Activated T-helper 1 cell treated with anti-CD3 and anti-CD28 coated beads, Interleukin-12 subunit alpha, Interleukin-12 subunit beta, Interleukin-2, Interleukin-4 antibody, amounts not matched to agents 30 ng/mL and 10 ng/mL and 1 ng/mL, durations not matched to agents 14 hours and 24 hours and 36 hours (primary cell): ENCODE measurements at regions of chr7 and their contacts with region 1.

Region 1: DNA sequence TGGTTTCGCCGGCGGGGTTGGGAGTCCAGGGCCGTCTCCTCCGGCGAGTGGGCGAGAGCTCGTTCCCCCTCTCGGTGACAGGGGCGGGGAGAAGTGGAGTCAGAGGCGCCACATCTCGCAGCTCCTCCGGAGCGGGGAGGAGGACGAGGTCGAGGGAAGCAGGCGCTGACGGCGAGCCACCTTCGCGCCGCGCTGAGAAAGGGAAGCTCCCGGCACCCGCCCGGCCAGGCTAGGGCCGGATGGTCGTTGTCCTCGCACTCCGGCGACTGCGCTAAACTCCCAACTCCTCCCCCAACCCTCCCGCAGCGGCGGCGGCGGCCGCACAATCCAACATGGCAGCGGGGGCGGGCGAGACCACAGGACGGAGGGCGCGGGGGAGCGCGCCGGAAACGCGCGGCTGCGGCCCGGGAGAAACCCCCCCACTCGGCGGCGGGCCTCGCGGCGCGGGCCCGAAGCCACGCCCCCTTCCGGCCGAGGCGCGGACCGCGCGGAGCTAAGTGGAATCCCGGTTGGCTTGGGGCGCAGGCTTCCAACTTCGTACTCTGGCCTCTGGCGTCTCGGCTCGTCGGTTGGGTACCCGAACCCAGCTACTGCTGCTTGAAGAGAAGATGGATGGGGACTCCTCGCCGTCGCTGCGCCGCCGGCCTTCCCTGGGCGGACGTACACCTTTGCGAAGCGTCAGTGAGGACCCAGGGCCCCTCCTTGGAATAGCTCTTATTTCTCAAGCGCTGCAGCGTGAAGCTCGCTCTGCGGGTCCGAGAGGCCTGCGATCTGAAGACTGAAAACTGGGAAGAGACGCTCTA is at the start of gene WASL:
- DNase-seq: peak; percentile 86
- H3K4me3 Mint-ChIP-seq: peak within 1 kb of the TSS; percentile 99
- H3K27ac Mint-ChIP-seq: peak within 1 kb of the TSS; percentile 96
- H3K4me1 Mint-ChIP-seq: peaks cover 62% of the 10 kb centered on the region
- H3K27me3 Mint-ChIP-seq: peaks cover 11% of the 10 kb centered on the region
- total RNA-seq, gene WASL: 7.3 and 7.5 TPM in 2 replicates

Region 2: DNA sequence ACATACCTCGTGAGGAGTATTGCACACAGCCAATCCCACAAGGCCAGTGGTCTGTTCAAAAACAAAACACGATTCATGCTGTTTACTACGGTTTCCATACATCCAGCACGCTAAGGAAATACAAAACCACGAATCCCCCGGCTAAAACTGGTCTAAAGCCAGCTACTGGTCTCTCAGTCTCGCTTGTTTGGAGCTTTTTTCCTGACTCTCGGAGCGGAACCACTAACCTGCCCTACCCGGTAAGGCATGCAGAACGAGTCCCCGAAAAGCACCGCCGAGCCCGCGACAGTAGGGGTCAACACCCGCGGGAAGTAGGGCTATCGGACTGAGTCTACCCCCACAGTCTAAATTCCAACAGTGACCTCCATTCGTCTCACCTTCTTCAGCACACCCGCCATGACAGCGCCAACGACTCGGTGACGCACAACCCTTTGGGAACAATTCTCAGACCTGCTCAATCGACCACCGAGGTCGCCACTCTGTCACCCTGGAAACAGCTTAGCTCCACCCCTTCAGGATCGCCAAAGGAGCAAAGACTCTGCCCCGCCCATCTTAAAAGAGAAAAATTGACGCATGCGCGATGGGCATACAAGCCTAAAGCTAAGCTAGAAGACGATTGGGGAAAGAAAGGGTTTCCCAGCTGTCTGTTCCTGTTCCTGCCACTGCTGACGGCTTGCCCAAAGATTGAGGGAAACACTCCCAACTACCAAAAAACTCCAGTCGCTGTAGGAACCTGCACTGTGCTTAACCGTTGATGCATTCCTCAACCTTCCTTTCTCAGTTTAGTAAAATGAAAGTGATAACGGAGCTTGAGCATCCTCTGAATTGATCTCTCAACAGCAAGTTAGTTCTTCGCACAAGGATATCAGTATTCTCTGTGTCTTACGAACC is 191.3 kb before region 1 on chr7 and contains the start of gene NDUFA5:
- intact Hi-C with region 1: loop called (anchors 1 kb)
- DNase-seq: peak; percentile 96
- H3K4me3 Mint-ChIP-seq: no peak within 1 kb of the TSS
- H3K27ac Mint-ChIP-seq: no peak within 1 kb of the TSS
- H3K4me1 Mint-ChIP-seq: no peaks in the 10 kb centered on the region
- H3K27me3 Mint-ChIP-seq: no peaks in the 10 kb centered on the region
- total RNA-seq, gene NDUFA5: 49.4 and 51.5 TPM in 2 replicates

Region 3: DNA sequence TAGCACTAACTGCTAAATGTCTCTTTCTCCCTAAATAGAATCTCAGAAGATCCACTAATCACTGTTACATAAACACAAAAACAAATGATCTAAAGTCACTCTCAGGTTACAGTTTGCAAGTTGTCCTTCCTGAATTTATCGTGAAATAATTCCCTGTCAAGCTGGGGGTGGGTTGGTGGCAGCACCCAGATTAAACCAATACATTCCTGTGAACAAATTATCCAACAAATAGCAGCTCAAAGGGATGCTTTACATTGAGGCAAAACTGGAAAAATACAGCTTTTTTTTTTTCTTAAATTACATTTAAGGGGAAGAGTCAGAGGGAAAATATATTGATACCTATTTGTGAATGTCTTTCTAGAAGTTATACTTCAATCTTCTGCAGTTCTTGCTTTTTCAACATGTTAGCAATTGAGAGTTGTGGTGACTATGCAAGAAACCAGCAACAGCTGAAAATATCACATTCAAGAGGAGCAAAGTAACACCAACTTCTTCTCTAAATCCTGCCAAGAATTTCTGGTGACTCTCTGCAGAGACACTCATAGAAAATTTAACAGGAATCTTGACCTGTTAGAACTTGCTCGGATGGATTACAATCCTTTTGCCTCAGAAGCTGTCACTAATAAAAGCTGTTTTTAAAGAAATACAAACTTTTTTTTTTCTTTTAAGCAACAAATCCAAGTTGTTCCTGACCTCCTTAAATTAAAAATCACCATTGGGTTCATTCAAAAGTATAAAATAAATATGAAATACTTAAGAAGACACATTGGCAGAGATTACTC is 74.3 kb before region 1 on chr7:
- intact Hi-C with region 1: no loop called
- DNase-seq: no peak
- H3K4me3 Mint-ChIP-seq: no peak overlapping the region
- H3K27ac Mint-ChIP-seq: no peak overlapping the region
- H3K4me1 Mint-ChIP-seq: no peaks in the 10 kb centered on the region
- H3K27me3 Mint-ChIP-seq: no peaks in the 10 kb centered on the region

Region 4: GRCh38 chr7:123712619-123713018 is 36.3 kb before region 1 on chr7:
- intact Hi-C with region 1: loop called (anchors 1 kb)
- DNase-seq: no peak
- H3K4me3 Mint-ChIP-seq: no peak overlapping the region
- H3K27ac Mint-ChIP-seq: peak overlapping the region; percentile 9
- H3K4me1 Mint-ChIP-seq: peaks cover 59% of the 10 kb centered on the region
- H3K27me3 Mint-ChIP-seq: no peaks in the 10 kb centered on the region

Region 5: GRCh38 chr7:123865517-123866117 is 116.7 kb after region 1 on chr7:
- intact Hi-C with region 1: loop called (anchors 1 kb)
- DNase-seq: peak; percentile 9
- H3K4me3 Mint-ChIP-seq: no peak overlapping the region
- H3K27ac Mint-ChIP-seq: no peak overlapping the region
- H3K4me1 Mint-ChIP-seq: no peaks in the 10 kb centered on the region
- H3K27me3 Mint-ChIP-seq: no peaks in the 10 kb centered on the region

Region 6: DNA sequence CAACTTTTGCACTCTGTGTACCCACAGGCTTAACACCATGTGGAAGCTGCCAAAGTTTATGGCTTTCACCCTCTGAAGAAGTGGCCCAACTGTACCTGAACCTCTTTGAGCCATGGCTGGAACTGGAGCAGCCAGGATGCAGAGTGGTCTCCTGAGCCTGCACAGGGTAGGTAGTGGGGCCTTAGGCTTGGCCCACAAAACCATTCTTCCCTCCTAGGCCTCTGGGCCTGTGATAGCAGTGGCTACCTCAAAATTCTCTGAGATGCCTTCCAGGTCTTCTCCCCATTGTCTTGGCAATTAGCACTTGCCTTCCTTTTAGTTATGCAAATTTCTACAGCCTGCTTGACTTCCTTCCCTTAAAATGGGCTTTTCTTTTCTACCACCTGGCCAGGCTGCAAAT is 156.8 kb after region 1 on chr7:
- intact Hi-C with region 1: no loop called
- DNase-seq: no peak
- H3K4me3 Mint-ChIP-seq: no peak overlapping the region
- H3K27ac Mint-ChIP-seq: no peak overlapping the region
- H3K4me1 Mint-ChIP-seq: no peaks in the 10 kb centered on the region
- H3K27me3 Mint-ChIP-seq: no peaks in the 10 kb centered on the region